K562 (cell line): ENCODE measurements at regions of chr3 and their contacts with region 1.

Region 1: DNA sequence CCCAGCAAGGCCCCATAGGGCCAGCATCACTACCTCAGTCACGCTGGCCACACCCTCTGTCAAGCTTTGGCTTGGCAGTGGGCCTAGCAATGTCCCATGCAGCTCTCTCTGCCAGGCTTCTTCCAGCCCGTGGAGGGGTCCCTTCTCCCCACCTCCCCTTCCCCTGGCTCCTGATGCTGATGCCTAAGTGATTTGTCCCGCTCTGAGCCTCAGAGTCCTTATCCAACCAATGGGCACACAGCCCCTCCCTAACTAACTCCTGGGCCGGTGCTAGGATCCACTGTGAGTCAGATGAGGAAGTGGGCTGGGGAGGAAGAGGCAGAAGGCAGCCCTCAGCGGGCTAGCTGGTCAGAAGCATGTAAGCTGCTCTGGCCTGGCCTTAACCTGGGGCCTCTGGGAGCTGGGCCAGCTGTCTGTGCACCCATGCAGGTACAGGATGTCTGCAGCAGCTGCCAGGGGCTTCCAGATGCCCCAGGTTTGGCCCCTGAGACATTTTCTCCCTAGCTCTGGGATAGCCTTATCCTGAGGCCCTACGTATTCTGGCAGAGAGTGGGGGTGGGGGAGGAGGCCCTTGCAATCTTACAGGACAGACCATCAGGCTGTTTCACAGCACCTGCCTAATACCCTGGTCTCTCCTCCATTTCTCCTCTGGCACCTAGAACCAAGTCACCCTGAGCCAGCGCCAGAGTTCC is 740 bp upstream of the ZBTB47 start:
- DNase-seq: peak; percentile 60 to 86 (median 70)
- ATAC-seq: peak; percentile 75
- H3K4me3 ChIP-seq: peak overlapping the region; percentile 6; the same call in 1 of the 2 replicates
- H3K27ac ChIP-seq: peak overlapping the region; percentile 37; the same call in 2 of the 3 replicates
- H3K4me1 ChIP-seq: peaks cover 16 to 43% of the 10 kb centered on the region in 2 experiments
- H3K27me3 ChIP-seq: no peaks in the 10 kb centered on the region
- CTCF ChIP-seq: no peak
- EP300 ChIP-seq: no peak
- POLR2A ChIP-seq: peak; percentile 75
- RAD21 ChIP-seq: peak in 1 of 2 experiments; percentile 12; a peak in 1 of 4 replicates

Region 2: DNA sequence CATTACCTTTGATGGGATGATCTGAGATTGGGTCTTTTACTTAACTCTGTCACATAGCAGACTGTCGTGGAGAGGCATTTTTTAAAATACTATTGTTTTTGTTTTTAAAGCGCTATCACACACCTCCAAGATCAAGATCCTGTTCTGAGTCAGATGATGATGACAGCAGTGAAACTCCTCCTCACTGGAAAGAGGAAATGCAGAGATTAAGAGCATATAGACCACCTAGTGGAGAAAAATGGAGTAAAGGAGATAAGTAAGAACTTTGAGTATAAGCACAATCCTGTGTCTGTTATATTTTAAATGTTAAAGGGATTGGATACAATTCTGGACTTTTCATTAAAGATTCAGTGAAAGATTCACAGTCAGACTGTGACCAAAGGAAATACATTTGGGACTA is 17.6 kb before region 1 on chr3:
- CTCF ChIA-PET with region 1: no interaction called
- POLR2A ChIA-PET with region 1: interaction called, 37 read pairs
- in situ Hi-C with region 1: no loop called
- intact Hi-C with region 1: no loop called
- DNase-seq: peak in 3 of 4 experiments; percentile 41 to 58 (median 58)
- ATAC-seq: peak; percentile 88
- H3K4me3 ChIP-seq: no peak overlapping the region
- H3K27ac ChIP-seq: no peak overlapping the region
- H3K4me1 ChIP-seq: no peaks in the 10 kb centered on the region; a peak in 1 of 5 replicates
- H3K27me3 ChIP-seq: no peaks in the 10 kb centered on the region
- CTCF ChIP-seq: peak; percentile 33 to 69 (median 42); a peak in 4 of 6 replicates
- EP300 ChIP-seq: peak; percentile 52
- POLR2A ChIP-seq: no peak
- RAD21 ChIP-seq: peak; percentile 56 to 74

Region 3: GRCh38 chr3:42690766-42691680 is 38.3 kb after region 1 on chr3:
- CTCF ChIA-PET with region 1: no interaction called
- POLR2A ChIA-PET with region 1: no interaction called
- in situ Hi-C with region 1: no loop called
- intact Hi-C with region 1: no loop called
- DNase-seq: no peak
- ATAC-seq: peak; percentile 46
- H3K4me3 ChIP-seq: no peak overlapping the region
- H3K27ac ChIP-seq: no peak overlapping the region
- H3K4me1 ChIP-seq: peaks cover 0 to 13% of the 10 kb centered on the region in 2 experiments; a peak in 2 of 5 replicates
- H3K27me3 ChIP-seq: peaks cover 24 to 72% of the 10 kb centered on the region in 2 experiments
- CTCF ChIP-seq: peak in 1 of 3 experiments; percentile 19; a peak in 1 of 6 replicates
- EP300 ChIP-seq: no peak
- POLR2A ChIP-seq: no peak
- RAD21 ChIP-seq: no peak

Region 4: GRCh38 chr3:42749753-42750231 is 97.0 kb after region 1 on chr3:
- CTCF ChIA-PET with region 1: no interaction called
- POLR2A ChIA-PET with region 1: no interaction called
- in situ Hi-C with region 1: loop called (anchors 5 kb)
- intact Hi-C with region 1: no loop called
- DNase-seq: peak; percentile 58 to 72 (median 62)
- ATAC-seq: peak; percentile 90
- H3K4me3 ChIP-seq: no peak overlapping the region
- H3K27ac ChIP-seq: no peak overlapping the region
- H3K4me1 ChIP-seq: no peaks in the 10 kb centered on the region; a peak in 1 of 5 replicates
- H3K27me3 ChIP-seq: peaks cover 8 to 56% of the 10 kb centered on the region in 2 experiments; a peak in 4 of 5 replicates
- CTCF ChIP-seq: peak; percentile 84 to 90 (median 88)
- EP300 ChIP-seq: no peak
- POLR2A ChIP-seq: no peak
- RAD21 ChIP-seq: peak; percentile 61 to 79

Region 5: DNA sequence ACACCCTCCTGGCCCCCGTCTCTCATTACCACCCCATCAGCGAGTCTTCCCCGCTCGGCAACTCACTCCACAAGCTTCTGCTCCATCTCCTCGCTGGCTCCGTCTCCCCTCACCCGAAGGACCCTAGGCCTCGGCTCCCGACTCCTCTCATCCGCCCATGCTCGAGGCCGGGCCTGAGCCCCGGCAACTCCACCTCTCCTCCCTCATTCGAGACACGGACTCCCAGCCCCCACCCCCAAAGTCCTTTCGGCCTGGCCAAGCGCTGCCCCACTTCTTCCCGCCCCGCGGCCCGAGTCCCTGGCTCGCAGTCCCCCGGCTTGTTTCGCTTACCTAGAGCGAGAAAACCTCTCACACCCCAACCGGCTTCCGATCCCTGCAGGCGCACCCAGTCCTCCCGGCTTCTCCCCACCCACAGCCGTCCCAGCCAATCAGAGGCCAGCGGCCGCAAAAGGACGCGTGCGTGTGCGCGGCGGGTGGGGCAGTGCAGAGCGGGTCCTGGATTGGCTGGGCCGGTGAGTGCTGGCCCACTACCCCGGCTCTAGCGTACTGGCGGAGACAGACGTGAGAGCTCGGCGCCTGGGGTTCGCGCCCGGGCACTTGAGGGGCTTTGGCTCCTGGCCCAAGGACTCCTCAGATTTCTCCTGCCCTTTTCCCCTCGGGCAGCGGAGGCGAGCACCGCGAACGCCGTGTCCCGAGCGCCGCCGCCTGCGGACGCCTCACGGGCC is 151.5 kb after region 1 on chr3 and contains the start of gene HIGD1A:
- CTCF ChIA-PET with region 1: no interaction called
- POLR2A ChIA-PET with region 1: no interaction called
- in situ Hi-C with region 1: no loop called
- intact Hi-C with region 1: no loop called
- DNase-seq: peak; percentile 99 to 100 (median 100)
- ATAC-seq: peak; percentile 98
- H3K4me3 ChIP-seq: peak within 1 kb of the TSS; percentile 75
- H3K27ac ChIP-seq: peak within 1 kb of the TSS; percentile 83
- H3K4me1 ChIP-seq: peaks cover 20 to 26% of the 10 kb centered on the region in 2 experiments; a peak in 4 of 5 replicates
- H3K27me3 ChIP-seq: no peaks in the 10 kb centered on the region
- CTCF ChIP-seq: no peak
- EP300 ChIP-seq: no peak
- POLR2A ChIP-seq: peak; percentile 96
- RAD21 ChIP-seq: 0 out of 4 replicates have a peak, but pooled peaks of 1 of the 2 experiments have one; percentile 2
- polyA plus RNA-seq, gene HIGD1A: 1,116 to 1,185 TPM